ENCODE measurements at regions of chr12 and their contacts with region 1.

Region 1: DNA sequence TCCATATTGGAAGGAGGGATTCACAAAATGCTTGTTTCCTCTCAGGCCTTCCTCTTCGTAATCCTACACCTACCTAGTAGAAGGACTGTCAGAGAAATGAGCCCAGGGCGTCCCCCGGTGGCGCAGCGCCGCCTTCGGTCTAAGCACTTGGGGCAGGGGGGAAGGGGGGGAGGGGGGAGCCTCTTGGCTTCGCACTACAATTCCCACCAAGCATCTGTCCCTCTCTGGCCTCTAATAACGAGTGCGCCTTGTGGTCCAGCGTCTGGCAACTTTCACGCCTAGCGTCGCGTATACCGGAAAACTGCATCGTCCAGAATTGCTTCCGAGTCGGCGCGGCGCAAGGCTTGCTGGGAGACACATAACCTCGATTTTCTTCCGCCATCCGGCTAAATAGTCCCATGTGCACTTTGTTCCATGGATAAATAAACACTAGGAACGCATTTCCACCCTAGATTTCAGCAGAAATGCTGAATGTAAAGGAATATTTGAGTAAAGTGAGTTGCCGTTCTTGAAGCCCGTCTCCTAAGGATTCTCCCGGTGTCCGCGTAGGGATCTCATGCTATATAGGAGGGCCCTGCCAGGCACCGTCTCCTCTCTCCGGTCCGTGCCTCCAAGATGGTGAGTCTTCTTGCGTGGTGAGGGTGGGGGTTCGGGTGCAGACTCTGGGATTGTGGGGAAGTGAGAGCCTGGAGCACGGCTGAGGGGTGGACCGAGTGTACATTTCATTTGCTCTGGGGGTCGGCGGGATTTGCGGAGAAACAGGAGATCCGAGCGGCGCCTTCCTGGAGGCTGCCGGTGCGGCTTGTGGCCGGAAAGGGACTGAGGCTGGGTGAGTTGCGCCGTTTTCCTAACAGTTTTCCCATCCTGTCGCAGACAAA is at the start of gene RPS26:
- DNase-seq: peak; percentile 92 to 95 (median 94)
- ATAC-seq: peak; percentile 89 to 95 (median 91)
- H3K4me3 ChIP-seq: peak within 1 kb of the TSS; percentile 71 to 93 (median 87)
- H3K27ac ChIP-seq: peak within 1 kb of the TSS; percentile 94 to 97 (median 95)
- H3K4me1 ChIP-seq: peaks cover 0 to 23% (median 8%) of the 10 kb centered on the region in 4 donors
- H3K27me3 ChIP-seq: no peaks in the 10 kb centered on the region
- CTCF ChIP-seq: peak in 3 of 4 donors; percentile 37 to 54 (median 53)
- POLR2A ChIP-seq: peak; percentile 92
- total RNA-seq, gene RPS26: 17.2 to 600 (median 24.9) TPM

Region 2: GRCh38 chr12:55996715-55997534 is 44.9 kb before region 1 on chr12 and contains the start of gene SUOX:
- intact Hi-C with region 1: loop called (anchors 5 to 10 kb)
- DNase-seq: peak; percentile 96 to 99 (median 99)
- ATAC-seq: peak; percentile 95 to 99 (median 95)
- H3K4me3 ChIP-seq: peak within 1 kb of the TSS; percentile 64 to 91 (median 70)
- H3K27ac ChIP-seq: peak within 1 kb of the TSS; percentile 57 to 87 (median 84)
- H3K4me1 ChIP-seq: peaks cover 0 to 48% (median 10%) of the 10 kb centered on the region in 4 donors
- H3K27me3 ChIP-seq: no peaks in the 10 kb centered on the region
- CTCF ChIP-seq: peak in 1 of 4 donors; percentile 8
- POLR2A ChIP-seq: peak; percentile 66
- total RNA-seq, gene SUOX: 31.5 to 63.7 (median 47.9) TPM

Region 3: DNA sequence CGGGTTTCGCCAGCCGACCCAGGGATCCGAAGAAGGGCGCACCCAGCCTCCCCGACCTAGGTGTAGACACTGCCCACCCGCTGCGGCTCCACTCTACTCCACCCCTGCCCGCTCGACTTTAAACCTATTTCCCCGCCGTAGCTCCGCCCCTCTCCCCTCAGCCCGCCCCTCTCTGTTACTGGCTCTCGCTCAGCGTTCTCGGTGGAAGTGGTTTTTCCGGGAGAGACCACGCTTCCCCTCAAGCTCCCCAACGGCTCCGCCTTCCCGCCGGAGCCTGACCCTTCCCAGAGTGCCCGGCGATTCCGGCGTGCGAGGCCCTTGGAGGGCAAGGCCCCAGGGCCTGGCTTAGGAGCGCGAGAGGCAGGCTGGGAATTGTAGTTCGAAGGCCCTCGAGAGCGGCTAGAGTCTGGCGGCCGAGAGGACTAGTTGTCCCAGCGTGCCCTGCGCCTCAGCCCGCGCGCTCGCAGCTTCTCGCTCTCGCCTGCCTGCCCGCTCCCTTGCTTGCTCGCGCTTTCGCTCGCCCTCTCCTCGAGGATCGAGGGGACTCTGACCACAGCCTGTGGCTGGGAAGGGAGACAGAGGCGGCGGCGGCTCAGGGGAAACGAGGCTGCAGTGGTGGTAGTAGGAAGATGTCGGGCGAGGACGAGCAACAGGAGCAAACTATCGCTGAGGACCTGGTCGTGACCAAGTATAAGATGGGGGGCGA is 62.5 kb after region 1 on chr12 and contains the start of gene PA2G4:
- intact Hi-C with region 1: loop called (anchors 5 to 10 kb)
- DNase-seq: peak; percentile 99
- ATAC-seq: peak; percentile 93 to 97 (median 95)
- H3K4me3 ChIP-seq: peak within 1 kb of the TSS; percentile 69 to 89 (median 82)
- H3K27ac ChIP-seq: peak within 1 kb of the TSS; percentile 64 to 82 (median 64)
- H3K4me1 ChIP-seq: peaks cover 0 to 19% (median 4%) of the 10 kb centered on the region in 4 donors
- H3K27me3 ChIP-seq: no peaks in the 10 kb centered on the region
- CTCF ChIP-seq: no peak
- POLR2A ChIP-seq: peak; percentile 97
- total RNA-seq, gene PA2G4: 29.7 to 82.4 (median 36.6) TPM

Region 4: DNA sequence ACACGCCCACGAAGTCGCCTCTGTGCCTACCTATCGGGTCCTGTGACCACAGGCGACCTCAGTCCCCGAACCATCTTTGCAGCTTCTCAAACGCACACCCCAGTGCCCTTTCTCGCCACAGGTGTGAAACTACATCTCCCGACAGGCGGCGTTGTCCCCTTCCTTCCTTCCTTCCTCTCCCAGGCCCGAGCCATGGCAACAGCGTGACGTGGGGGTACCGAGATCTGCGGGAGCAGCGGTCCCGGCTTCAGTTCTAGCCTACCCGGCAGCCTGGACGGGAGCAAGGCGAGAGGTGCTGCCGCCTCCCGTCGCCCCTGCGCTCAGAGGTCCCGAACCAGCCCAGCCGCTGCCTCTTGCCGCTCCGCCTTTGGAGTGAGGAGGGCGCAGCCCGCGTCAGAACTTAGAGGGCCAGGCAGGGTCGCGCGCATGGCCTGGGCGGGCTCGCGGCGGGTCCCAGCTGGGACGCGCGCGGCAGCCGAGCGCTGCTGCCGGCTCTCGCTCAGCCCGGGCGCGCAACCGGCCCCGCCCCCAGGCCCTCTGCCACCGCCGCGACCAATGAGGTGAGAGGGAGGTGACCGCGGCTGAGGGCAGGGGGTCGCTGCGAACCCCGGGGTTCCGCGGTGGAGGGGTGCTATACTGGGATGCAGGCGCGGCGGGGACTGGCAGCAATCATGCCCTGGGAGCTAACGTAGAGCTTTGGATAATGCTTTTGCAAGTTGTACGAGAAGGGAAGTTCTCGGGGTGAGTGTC is 225.1 kb after region 1 on chr12 and contains the start of gene COQ10A:
- intact Hi-C with region 1: no loop called
- DNase-seq: peak; percentile 92 to 93 (median 93)
- ATAC-seq: peak; percentile 88 to 96 (median 91)
- H3K4me3 ChIP-seq: peak within 1 kb of the TSS; percentile 72 to 83 (median 80)
- H3K27ac ChIP-seq: peak within 1 kb of the TSS; percentile 76 to 90 (median 86)
- H3K4me1 ChIP-seq: peaks cover 0 to 36% (median 5%) of the 10 kb centered on the region in 4 donors
- H3K27me3 ChIP-seq: no peaks in the 10 kb centered on the region
- CTCF ChIP-seq: peak; percentile 55 to 66 (median 60)
- POLR2A ChIP-seq: peak; percentile 89
- total RNA-seq, gene COQ10A: 5.5 to 25.1 (median 13.0) TPM